ENCODE measurements at regions of chr12 and their contacts with region 1.

Region 1: GRCh38 chr12:53701518-53702260 is 25.6 kb downstream of the CALCOCO1 start:
- DNase-seq: peak; percentile 61 to 85 (median 72)
- ATAC-seq: peak; percentile 91
- H3K4me3 ChIP-seq: no peak overlapping the region
- H3K4me3 Mint-ChIP-seq: no peak overlapping the region
- H3K27ac ChIP-seq: no peak overlapping the region
- H3K27ac Mint-ChIP-seq: no peak overlapping the region
- H3K4me1 ChIP-seq: peaks cover 4% of the 10 kb centered on the region
- H3K4me1 Mint-ChIP-seq: peaks cover 6% of the 10 kb centered on the region
- H3K27me3 ChIP-seq: peaks cover 50 to 62% of the 10 kb centered on the region in 2 experiments
- H3K27me3 Mint-ChIP-seq: peaks cover 95% of the 10 kb centered on the region
- CTCF ChIP-seq: peak; percentile 90

Region 2: DNA sequence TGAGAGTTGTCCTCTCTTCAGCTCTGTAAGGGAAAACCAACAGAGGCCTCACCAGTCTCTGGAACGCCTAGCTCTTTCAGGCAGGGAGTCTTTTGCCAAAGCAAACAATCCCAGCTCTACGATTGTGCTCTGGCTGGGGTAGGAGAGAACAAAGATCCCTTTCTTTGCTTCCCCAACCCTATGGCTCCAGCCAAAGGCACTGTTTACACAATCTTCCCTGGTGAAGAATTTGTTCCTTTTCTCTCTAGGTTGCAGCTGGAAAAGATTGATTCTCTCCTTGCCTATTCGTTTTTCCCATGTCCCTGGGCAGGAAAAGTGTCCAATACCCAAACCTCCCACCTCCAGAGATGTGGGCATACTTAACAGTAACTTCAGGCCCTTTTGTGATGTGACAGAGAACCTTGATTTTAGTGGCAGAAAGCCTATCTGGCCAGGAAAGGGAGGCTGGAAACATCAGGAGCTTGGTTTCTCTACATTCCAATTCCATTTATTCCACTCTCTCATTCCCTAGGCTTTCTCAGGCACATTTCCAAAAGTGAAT is 42.6 kb before region 1 on chr12:
- CTCF ChIA-PET with region 1: no interaction called
- POLR2A ChIA-PET with region 1: no interaction called
- intact Hi-C with region 1: no loop called
- DNase-seq: no peak
- ATAC-seq: no peak
- H3K4me3 ChIP-seq: no peak overlapping the region
- H3K4me3 Mint-ChIP-seq: no peak overlapping the region
- H3K27ac ChIP-seq: no peak overlapping the region
- H3K27ac Mint-ChIP-seq: no peak overlapping the region
- H3K4me1 ChIP-seq: no peaks in the 10 kb centered on the region
- H3K4me1 Mint-ChIP-seq: no peaks in the 10 kb centered on the region
- H3K27me3 ChIP-seq: no peaks in the 10 kb centered on the region
- H3K27me3 Mint-ChIP-seq: no peaks in the 10 kb centered on the region
- CTCF ChIP-seq: no peak

Region 3: GRCh38 chr12:54207484-54208294 is 506.0 kb after region 1 on chr12:
- CTCF ChIA-PET with region 1: no interaction called
- POLR2A ChIA-PET with region 1: no interaction called
- intact Hi-C with region 1: loop called in 1 of 2 experiments (anchors 10 kb)
- DNase-seq: peak; percentile 59 to 84 (median 72)
- ATAC-seq: peak; percentile 96
- H3K4me3 ChIP-seq: no peak overlapping the region
- H3K4me3 Mint-ChIP-seq: no peak overlapping the region
- H3K27ac ChIP-seq: no peak overlapping the region
- H3K27ac Mint-ChIP-seq: no peak overlapping the region
- H3K4me1 ChIP-seq: peaks cover 7% of the 10 kb centered on the region
- H3K4me1 Mint-ChIP-seq: no peaks in the 10 kb centered on the region
- H3K27me3 ChIP-seq: peaks cover 13 to 31% of the 10 kb centered on the region in 2 experiments
- H3K27me3 Mint-ChIP-seq: peaks cover 53% of the 10 kb centered on the region
- CTCF ChIP-seq: peak; percentile 92

Measured in CD4-positive, alpha-beta T cell (primary cell).